HCT116 (cell line): ENCODE measurements at regions of chr9 and their contacts with region 1.

Region 1: GRCh38 chr9:73176450-73176875 is 24.8 kb downstream of the ANXA1 start:
- DNase-seq: peak; percentile 78
- ATAC-seq: peak; percentile 80
- H3K4me3 ChIP-seq: no peak overlapping the region; a peak in 1 of 4 replicates
- H3K27ac ChIP-seq: peak overlapping the region; percentile 66
- H3K4me1 ChIP-seq: peaks cover 41 to 65% of the 10 kb centered on the region in 2 experiments
- H3K27me3 ChIP-seq: no peaks in the 10 kb centered on the region
- CTCF ChIP-seq: no peak
- POLR2A ChIP-seq: no peak
- RAD21 ChIP-seq: no peak

Region 2: DNA sequence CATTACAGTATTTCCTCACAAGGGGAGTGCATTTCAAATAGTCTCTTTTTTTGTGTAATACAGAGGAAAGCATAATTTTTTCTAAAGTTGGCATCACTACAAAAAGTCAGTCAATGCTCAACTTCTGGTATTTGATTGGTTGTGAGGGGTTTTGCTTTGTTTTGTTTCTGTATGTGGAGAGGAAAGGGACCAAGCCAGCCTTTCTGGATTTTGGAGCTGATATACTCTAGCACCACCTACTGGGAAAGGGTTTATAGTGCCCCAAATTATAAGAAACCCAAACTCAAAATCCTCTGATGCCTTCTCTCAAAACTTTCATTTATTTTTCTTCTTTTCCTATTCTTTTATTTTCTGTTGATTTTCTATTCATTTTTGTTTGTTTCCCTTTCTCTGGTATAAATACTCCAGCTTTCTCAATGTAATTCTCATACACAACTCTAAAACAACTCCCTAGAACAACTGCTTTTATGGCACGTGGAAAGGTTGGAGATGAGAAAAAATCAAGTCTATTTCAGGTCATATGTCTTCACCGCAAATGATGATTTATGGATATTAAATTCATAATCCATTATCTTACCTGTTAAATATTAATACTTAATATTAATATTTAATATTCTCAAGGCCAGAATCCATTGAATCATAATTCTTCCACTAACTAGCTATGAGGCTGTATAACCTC is 94.3 kb before region 1 on chr9:
- CTCF ChIA-PET with region 1: interaction called, 23 read pairs
- POLR2A ChIA-PET with region 1: no interaction called
- RAD21 ChIA-PET with region 1: no interaction called
- intact Hi-C with region 1: no loop called
- DNase-seq: peak; percentile 41
- ATAC-seq: peak; percentile 68
- H3K4me3 ChIP-seq: no peak overlapping the region
- H3K27ac ChIP-seq: no peak overlapping the region
- H3K4me1 ChIP-seq: peaks cover 5 to 12% of the 10 kb centered on the region in 2 experiments; a peak in 3 of 4 replicates
- H3K27me3 ChIP-seq: no peaks in the 10 kb centered on the region
- CTCF ChIP-seq: peak; percentile 57 to 78 (median 78); a peak in 5 of 6 replicates
- POLR2A ChIP-seq: no peak
- RAD21 ChIP-seq: peak; percentile 73

Region 3: GRCh38 chr9:73104342-73104741 is 72.1 kb before region 1 on chr9:
- CTCF ChIA-PET with region 1: interaction called, 25 read pairs
- POLR2A ChIA-PET with region 1: interaction called, 9 read pairs
- RAD21 ChIA-PET with region 1: interaction called, 5 to 8 read pairs
- intact Hi-C with region 1: no loop called
- DNase-seq: no peak
- ATAC-seq: no peak
- H3K4me3 ChIP-seq: no peak overlapping the region
- H3K27ac ChIP-seq: no peak overlapping the region
- H3K4me1 ChIP-seq: peaks cover 0 to 12% of the 10 kb centered on the region in 2 experiments; a peak in 2 of 4 replicates
- H3K27me3 ChIP-seq: no peaks in the 10 kb centered on the region
- CTCF ChIP-seq: no peak
- POLR2A ChIP-seq: no peak
- RAD21 ChIP-seq: no peak

Region 4: DNA sequence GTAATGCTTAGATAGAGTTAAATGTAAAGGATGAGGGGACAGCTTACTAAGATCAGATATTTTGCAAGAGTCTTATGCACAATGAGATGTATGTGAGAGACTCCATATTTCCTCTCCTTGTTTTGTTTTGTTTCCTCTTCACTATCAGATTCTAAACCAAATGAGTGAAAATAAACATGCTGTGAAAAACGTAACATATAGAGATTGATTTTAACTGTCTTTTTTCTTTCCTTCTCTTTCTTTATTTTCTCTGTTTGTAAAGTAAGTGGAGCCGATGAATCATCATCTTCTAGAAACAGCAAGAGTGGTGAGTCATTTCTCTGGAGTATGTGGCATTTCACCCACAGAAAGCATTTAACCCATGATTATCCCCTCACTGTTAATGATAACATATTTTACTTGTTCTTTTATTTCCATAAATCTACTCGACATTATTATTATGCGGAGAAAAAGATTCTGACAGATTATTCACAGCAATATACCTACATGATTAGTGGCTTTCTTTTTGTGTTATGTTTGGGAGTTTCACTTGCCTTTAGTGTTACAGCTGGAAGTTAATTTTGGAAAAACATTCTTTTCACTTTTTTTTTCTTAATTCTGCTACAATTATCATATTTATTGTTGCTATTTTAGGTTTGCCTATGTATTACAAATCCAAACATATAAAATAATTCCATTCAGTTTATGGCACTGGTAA is 26.9 kb before region 1 on chr9:
- CTCF ChIA-PET with region 1: no interaction called
- POLR2A ChIA-PET with region 1: interaction called, 18 read pairs
- RAD21 ChIA-PET with region 1: interaction called in 1 of 2 experiments, 3 read pairs
- intact Hi-C with region 1: no loop called
- DNase-seq: peak; percentile 69
- ATAC-seq: peak; percentile 45
- H3K4me3 ChIP-seq: peak overlapping the region in 1 of 2 experiments; percentile 40; a peak in 2 of 4 replicates
- H3K27ac ChIP-seq: peak overlapping the region; percentile 95
- H3K4me1 ChIP-seq: peaks cover 54 to 74% of the 10 kb centered on the region in 2 experiments
- H3K27me3 ChIP-seq: no peaks in the 10 kb centered on the region
- CTCF ChIP-seq: no peak
- POLR2A ChIP-seq: no peak
- RAD21 ChIP-seq: peak; percentile 16; the same call in 1 of the 2 replicates

Region 5: DNA sequence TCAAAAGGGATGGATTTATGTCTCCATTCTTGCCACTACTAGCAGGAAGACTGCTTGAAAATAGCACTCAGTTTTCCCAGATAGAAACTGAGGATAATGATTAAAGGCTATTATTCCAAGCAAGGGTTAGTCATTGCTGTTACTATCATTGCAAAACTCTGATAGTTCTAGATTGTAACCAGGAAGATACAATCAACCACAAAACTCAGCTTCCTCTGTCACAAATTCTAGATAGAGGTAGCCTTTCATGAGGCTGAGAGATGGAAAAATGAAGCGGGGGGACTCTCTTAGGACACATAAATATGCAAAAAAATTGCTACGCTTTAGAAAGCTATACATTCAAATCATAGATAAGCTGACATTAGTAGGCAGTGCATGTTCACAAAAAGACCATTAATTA is 21.7 kb before region 1 on chr9:
- CTCF ChIA-PET with region 1: no interaction called
- POLR2A ChIA-PET with region 1: interaction called, 18 read pairs
- RAD21 ChIA-PET with region 1: no interaction called
- intact Hi-C with region 1: no loop called
- DNase-seq: no peak
- ATAC-seq: no peak
- H3K4me3 ChIP-seq: no peak overlapping the region
- H3K27ac ChIP-seq: peak overlapping the region; percentile 95; the same call in 1 of the 2 replicates
- H3K4me1 ChIP-seq: peaks cover 37 to 60% of the 10 kb centered on the region in 2 experiments
- H3K27me3 ChIP-seq: no peaks in the 10 kb centered on the region
- CTCF ChIP-seq: no peak
- POLR2A ChIP-seq: no peak
- RAD21 ChIP-seq: no peak